OCI-LY7 (cell line): ENCODE measurements at regions of chr13 and their contacts with region 1.

Region 1: DNA sequence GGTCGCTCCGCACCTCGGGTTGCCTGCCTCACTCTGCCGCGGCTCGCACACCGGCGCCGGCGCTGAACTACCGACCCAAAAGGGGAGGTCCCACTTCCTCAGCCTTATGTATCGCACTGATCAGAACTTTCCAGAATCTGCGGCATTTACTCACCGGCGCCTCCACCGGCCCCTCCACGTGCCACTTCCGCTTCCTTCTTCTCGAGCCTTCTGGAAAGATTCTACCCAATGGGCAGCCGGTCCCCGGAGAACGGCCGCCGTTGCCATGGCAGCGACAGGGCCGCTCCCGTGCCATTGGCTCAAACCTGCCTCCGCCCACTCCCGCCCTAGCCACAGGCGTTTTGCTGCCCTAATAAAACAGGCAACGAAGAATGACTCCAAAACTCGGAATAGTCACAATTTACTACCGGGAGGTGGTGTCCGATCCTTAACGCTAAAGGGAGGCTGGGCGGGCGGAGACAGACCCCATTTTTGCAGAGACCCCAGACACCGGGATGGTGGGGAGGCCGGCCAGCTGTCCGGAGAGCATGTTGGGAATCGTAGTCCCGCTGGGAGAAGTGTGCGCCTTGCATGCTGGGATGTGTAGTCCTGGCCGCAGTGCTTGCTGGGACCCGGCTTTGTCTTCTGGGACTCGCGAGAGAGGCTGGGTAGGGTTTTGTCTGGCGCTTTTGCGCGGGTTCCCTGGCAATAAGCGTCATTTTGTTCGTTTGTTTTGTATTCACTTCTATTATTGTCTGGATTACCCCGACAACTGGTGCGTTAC is at the start of gene HSPH1:
- DNase-seq: peak; percentile 99
- H3K4me3 ChIP-seq: peak within 1 kb of the TSS; percentile 91
- H3K27ac ChIP-seq: peak within 1 kb of the TSS; percentile 58
- H3K4me1 ChIP-seq: peaks cover 27% of the 10 kb centered on the region
- CTCF ChIP-seq: peak; percentile 45
- total RNA-seq, gene HSPH1: 89.6 and 110 TPM in 2 replicates

Region 2: DNA sequence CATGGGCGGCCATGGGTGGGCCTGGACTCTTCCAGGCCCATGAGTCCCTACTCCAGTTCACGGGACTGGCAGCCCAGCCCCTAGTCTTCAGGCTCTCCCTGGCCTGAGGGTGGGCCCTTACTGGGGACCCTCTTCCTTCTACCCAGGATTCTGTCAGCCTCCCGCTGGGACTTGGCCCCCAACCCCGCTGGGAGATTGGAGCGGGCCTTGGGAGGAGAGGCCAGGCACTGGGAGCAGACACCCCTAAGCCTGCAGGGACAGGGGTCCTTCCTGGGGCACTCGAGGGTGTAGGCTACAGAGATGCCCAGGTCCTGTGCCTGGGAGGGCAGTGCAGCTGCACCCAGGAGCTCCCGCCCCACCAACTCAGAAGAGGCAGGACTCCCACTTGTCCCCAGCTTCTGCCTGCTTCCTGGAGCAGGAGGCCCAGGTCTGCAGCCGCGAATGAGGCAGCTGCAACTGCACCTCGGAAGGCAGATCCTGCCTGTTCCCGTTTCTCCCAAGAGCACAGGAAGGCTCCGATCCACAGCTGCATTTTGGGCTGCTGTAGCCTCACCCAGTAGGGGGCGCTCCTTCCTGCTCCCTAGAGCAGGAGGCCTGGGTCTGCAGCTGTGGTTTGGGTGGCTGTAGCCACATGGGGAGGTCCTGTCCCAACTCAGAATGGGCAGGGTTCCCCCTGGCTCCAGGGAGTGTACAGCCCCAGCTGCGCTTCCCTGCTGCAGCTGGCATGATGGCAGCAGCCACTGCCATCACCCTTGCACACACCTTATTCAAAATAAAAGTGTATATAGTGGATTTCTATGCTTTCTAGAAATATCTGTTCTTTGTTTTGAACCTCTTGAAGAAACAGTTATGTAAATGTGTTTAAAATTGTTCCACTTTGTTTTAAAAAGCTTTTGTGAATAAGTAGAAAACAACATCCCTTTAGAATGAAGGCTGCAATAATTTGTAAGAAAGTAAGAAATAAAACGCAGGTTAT is 182.7 kb before region 1 on chr13:
- CTCF ChIA-PET with region 1: no interaction called
- POLR2A ChIA-PET with region 1: no interaction called
- intact Hi-C with region 1: loop called (anchors 10 kb)
- DNase-seq: peak; percentile 60
- H3K4me3 ChIP-seq: no peak overlapping the region
- H3K27ac ChIP-seq: no peak overlapping the region
- H3K4me1 ChIP-seq: no peaks in the 10 kb centered on the region
- CTCF ChIP-seq: peak; percentile 89

Region 3: GRCh38 chr13:31073859-31074718 is 87.9 kb before region 1 on chr13:
- CTCF ChIA-PET with region 1: interaction called, 3 read pairs
- POLR2A ChIA-PET with region 1: interaction called, 3 read pairs
- intact Hi-C with region 1: loop called (anchors 1 kb)
- DNase-seq: peak; percentile 96
- H3K4me3 ChIP-seq: peak overlapping the region; percentile 50
- H3K27ac ChIP-seq: peak overlapping the region; percentile 96
- H3K4me1 ChIP-seq: peaks cover 44% of the 10 kb centered on the region
- CTCF ChIP-seq: no peak

Region 4: GRCh38 chr13:31138515-31138914 is 23.5 kb before region 1 on chr13:
- CTCF ChIA-PET with region 1: no interaction called
- POLR2A ChIA-PET with region 1: interaction called, 6 read pairs
- intact Hi-C with region 1: loop called (anchors 2 kb)
- DNase-seq: no peak
- H3K4me3 ChIP-seq: no peak overlapping the region
- H3K27ac ChIP-seq: no peak overlapping the region
- H3K4me1 ChIP-seq: no peaks in the 10 kb centered on the region
- CTCF ChIP-seq: no peak

Region 5: DNA sequence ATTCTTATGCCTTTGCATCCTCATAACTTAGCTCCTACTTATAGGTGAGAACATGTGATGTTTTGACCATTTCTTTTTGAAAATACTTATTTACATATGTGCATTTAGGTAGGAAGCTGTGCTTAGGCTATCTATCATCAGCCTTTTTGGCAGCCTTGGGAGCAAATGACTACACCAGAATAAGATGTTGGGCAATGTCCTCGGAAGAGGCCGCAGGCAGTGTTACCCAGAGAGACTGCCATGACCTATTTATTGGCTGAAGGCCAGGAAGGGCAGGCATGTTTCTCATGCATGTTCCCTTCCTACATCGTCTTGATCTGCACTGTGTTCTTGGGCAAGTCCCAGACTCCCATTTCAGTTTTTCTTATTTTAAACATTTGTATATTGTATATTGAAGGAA is 160.0 kb after region 1 on chr13:
- CTCF ChIA-PET with region 1: no interaction called
- POLR2A ChIA-PET with region 1: no interaction called
- intact Hi-C with region 1: loop called (anchors 5 kb)
- DNase-seq: peak; percentile 41
- H3K4me3 ChIP-seq: peak overlapping the region; percentile 55
- H3K27ac ChIP-seq: peak overlapping the region; percentile 98
- H3K4me1 ChIP-seq: peaks cover 78% of the 10 kb centered on the region
- CTCF ChIP-seq: no peak